IMR-90 (cell line): ENCODE measurements at regions of chr14 and their contacts with region 1.

Region 1: DNA sequence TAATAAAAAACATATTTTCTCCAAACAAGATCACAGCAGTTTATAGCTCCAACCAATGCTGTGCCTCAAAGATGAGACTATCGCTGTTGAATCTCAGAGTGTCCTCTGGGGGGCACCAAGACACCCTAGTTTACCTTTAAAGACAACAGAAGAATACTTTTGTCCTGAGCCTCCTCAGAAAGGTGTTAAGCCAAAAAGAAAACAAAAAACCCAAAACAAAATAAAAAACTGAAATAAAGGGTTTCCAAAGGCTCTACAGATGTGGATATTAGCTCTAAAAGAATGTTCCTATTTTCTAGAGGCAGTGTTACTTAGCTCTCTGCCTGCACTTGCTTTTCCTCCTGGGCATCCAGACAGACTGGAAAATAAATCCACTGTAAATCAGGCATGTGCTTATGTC is 86.9 kb upstream of the TTC7B start:
- DNase-seq: peak; percentile 53
- ATAC-seq: peak; percentile 94
- H3K4me3 ChIP-seq: no peak overlapping the region
- H3K27ac ChIP-seq: no peak overlapping the region
- H3K4me1 ChIP-seq: no peaks in the 10 kb centered on the region
- H3K27me3 ChIP-seq: no peaks in the 10 kb centered on the region
- CTCF ChIP-seq: peak; percentile 78
- POLR2A ChIP-seq: no peak
- RAD21 ChIP-seq: peak; percentile 75

Region 2: DNA sequence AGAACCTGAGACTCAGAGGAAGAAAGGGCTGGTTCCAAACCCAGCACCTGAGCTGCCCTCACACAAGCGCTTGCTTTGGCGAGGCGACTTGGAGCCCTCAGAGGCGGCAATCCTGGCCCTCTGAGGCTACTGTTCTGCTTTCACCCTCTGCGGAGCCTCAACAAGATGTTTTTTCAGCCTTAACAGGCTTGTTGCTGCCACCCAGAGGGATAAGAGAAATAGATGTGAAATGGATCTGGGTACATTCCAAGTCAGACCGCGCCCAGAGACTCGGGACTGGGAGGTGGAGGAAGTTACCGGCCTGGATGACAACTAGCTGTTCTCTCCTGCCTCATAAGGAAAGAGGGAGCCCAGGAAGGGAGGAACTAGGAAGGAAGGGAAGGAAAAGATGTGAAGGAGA is 176.4 kb before region 1 on chr14:
- CTCF ChIA-PET with region 1: interaction called, 6 read pairs
- POLR2A ChIA-PET with region 1: no interaction called
- dilution Hi-C with region 1: no loop called
- in situ Hi-C with region 1: no loop called
- intact Hi-C with region 1: loop called (anchors 5 kb)
- DNase-seq: peak; percentile 37
- ATAC-seq: peak; percentile 73
- H3K4me3 ChIP-seq: no peak overlapping the region
- H3K27ac ChIP-seq: no peak overlapping the region
- H3K4me1 ChIP-seq: no peaks in the 10 kb centered on the region
- H3K27me3 ChIP-seq: no peaks in the 10 kb centered on the region
- CTCF ChIP-seq: 0 out of 2 replicates have a peak, but pooled peaks have one; percentile 21
- POLR2A ChIP-seq: no peak
- RAD21 ChIP-seq: peak; percentile 17; the same call in 1 of the 2 replicates

Region 3: DNA sequence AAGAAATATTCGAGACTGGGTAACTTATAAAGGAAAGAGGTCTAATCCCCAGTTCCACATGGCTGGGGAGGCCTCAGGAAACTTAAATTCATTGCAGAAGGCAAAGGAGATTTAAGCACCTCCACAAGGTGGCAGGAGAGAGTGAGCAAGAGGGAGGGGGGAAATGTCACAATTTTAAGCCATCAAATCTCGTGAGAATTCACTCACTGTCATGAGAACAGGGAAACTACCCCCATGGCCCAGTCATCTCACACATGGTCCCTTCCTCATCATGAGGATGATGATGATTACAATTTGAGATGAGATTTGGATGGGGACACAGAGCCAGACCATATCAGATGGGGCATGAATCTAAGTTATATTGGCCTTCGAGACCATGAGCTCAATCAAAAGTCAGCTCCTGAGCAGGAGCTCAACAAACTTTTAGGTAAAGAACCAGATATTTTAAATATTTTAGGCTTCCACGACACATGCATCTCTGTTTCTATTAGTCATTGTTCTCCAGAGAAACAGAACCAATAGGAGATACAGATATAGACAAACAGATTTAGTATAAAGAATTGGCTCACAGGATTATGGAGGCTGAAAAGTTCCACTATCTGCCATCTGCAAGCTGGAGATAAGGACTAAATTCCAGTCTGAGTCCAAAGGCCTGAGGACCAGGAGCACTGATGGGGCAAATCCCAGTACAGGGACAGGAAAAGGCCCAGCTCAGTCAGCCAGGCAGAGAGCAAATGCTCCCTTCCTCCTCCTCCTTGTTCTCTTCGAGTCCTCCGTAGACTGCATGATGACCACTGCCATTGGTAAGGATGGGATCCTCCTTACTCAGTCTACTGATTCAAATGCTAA is 235.6 kb after region 1 on chr14:
- CTCF ChIA-PET with region 1: no interaction called
- POLR2A ChIA-PET with region 1: no interaction called
- dilution Hi-C with region 1: no loop called
- in situ Hi-C with region 1: no loop called
- intact Hi-C with region 1: loop called (anchors 1 kb)
- DNase-seq: no peak
- ATAC-seq: peak; percentile 45
- H3K4me3 ChIP-seq: no peak overlapping the region
- H3K27ac ChIP-seq: no peak overlapping the region
- H3K4me1 ChIP-seq: no peaks in the 10 kb centered on the region; the same call in 1 of the 2 replicates
- H3K27me3 ChIP-seq: no peaks in the 10 kb centered on the region
- CTCF ChIP-seq: peak; percentile 57
- POLR2A ChIP-seq: no peak
- RAD21 ChIP-seq: peak; percentile 40

Region 4: GRCh38 chr14:91286530-91286937 is 383.4 kb after region 1 on chr14:
- CTCF ChIA-PET with region 1: interaction called, 7 read pairs
- POLR2A ChIA-PET with region 1: no interaction called
- dilution Hi-C with region 1: no loop called
- in situ Hi-C with region 1: loop called (anchors 5 kb)
- intact Hi-C with region 1: loop called (anchors 2 kb)
- DNase-seq: peak; percentile 62
- ATAC-seq: peak; percentile 82
- H3K4me3 ChIP-seq: no peak overlapping the region
- H3K27ac ChIP-seq: no peak overlapping the region
- H3K4me1 ChIP-seq: peaks cover 2% of the 10 kb centered on the region; the same call in 1 of the 2 replicates
- H3K27me3 ChIP-seq: no peaks in the 10 kb centered on the region; the same call in 1 of the 2 replicates
- CTCF ChIP-seq: peak; percentile 93
- POLR2A ChIP-seq: no peak
- RAD21 ChIP-seq: peak; percentile 84